Heart right ventricle (tissue), 16 donors: ENCODE measurements at regions of chr11 and their contacts with region 1.

Region 1: GRCh38 chr11:43422696-43423095 is 64.0 kb downstream of the TTC17 start:
- DNase-seq: no peak
- ATAC-seq: no peak
- H3K4me3 ChIP-seq: no peak overlapping the region
- H3K27ac ChIP-seq: no peak overlapping the region
- H3K4me1 ChIP-seq: no peaks in the 10 kb centered on the region
- H3K27me3 ChIP-seq: no peaks in the 10 kb centered on the region
- CTCF ChIP-seq: no peak

Region 2: GRCh38 chr11:43486141-43486540 is 63.4 kb after region 1 on chr11:
- intact Hi-C with region 1: loop called in 1 of 10 experiments (anchors 10 kb)
- DNase-seq: no peak
- ATAC-seq: no peak
- H3K4me3 ChIP-seq: no peak overlapping the region
- H3K27ac ChIP-seq: no peak overlapping the region
- H3K4me1 ChIP-seq: no peaks in the 10 kb centered on the region
- H3K27me3 ChIP-seq: no peaks in the 10 kb centered on the region
- CTCF ChIP-seq: no peak

Region 3: DNA sequence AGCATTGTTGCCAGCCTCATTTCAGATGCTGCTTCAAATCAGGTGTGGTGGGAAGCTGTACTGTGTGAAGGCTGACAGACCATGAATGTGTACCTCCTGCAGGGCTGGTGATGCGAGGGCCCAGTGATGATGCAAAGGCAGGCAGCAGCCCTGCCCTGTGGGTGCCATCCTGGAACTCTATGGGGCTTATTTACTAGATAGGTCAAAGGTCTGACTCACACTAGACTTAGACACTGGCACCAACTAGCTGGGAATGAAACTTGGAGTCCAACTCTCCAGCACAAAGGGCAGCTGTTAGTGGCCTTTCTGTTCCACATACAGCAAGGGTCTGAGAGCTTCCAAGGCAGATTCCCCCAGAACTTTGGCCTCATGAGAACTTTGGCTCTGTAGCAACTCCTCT is 74.4 kb after region 1 on chr11:
- intact Hi-C with region 1: no loop called
- DNase-seq: no peak
- ATAC-seq: no peak
- H3K4me3 ChIP-seq: no peak overlapping the region
- H3K27ac ChIP-seq: no peak overlapping the region
- H3K4me1 ChIP-seq: no peaks in the 10 kb centered on the region
- H3K27me3 ChIP-seq: no peaks in the 10 kb centered on the region
- CTCF ChIP-seq: no peak

Region 4: DNA sequence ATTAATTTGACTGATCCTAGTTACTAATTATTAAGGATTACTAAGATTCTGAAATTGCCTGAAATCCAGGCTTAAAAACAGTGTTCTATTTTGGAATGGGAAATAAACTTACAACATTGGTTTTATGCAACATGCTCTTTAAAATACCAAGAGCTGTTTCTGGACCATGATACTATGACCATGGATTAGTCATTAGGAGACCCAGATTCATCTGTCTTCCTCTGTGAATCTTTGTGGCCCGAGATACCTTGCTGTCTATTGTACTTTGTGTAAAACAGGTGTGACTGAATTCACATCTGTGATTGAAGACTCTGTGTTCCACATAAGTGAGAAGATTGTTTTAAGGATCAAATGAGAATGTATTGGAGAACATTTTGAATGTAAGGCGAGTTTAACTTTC is 356.6 kb after region 1 on chr11:
- intact Hi-C with region 1: no loop called
- DNase-seq: no peak
- ATAC-seq: no peak
- H3K4me3 ChIP-seq: no peak overlapping the region
- H3K27ac ChIP-seq: no peak overlapping the region
- H3K4me1 ChIP-seq: no peaks in the 10 kb centered on the region
- H3K27me3 ChIP-seq: no peaks in the 10 kb centered on the region
- CTCF ChIP-seq: no peak